ENCODE measurements at regions of chr14 and their contacts with region 1.

Region 1: DNA sequence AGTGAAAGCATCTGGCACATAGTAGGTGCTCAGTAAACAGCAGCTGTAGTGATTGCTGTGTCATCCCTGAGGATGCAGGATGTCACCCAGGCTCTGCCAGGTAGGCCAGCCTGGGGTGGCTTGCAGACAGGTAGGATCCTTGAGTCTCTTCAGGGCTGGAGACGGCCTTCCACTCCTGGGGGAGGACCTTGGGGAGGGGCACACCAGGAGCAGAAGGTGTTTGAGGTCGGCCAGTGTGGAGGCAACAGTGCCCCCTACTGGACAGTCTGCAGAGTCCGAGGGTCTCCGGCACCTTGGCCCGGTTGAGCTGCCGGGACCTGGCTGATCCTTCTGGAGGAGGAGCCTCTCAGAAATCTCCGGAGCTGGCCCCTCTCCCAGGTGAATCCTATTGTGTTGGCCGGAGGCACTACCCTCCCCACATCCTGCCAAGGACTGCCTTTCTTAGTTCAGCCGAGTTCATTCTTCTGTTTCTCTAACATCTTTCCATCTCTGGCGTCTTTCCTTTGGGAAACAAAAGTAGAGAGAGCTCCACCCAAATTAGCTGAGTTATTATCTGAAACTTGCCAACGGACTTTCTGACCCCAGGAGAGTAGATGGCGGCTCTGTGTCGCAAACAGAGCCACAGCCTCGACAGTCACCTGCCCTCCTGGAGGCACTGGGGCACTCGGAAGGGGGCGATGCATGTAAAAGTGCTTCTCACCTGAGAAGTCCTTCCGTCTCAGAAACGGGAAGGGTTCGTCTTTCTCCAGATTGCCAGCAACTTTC is 41.8 kb upstream of the CLMN start:
- DNase-seq: peak; percentile 36
- H3K4me3 ChIP-seq: no peak overlapping the region
- H3K27ac ChIP-seq: no peak overlapping the region
- H3K4me1 ChIP-seq: no peaks in the 10 kb centered on the region
- H3K27me3 ChIP-seq: peaks cover 0 to 4% of the 10 kb centered on the region in 2 experiments
- CTCF ChIP-seq: peak; percentile 66 to 75
- POLR2A ChIP-seq: no peak

Region 2: DNA sequence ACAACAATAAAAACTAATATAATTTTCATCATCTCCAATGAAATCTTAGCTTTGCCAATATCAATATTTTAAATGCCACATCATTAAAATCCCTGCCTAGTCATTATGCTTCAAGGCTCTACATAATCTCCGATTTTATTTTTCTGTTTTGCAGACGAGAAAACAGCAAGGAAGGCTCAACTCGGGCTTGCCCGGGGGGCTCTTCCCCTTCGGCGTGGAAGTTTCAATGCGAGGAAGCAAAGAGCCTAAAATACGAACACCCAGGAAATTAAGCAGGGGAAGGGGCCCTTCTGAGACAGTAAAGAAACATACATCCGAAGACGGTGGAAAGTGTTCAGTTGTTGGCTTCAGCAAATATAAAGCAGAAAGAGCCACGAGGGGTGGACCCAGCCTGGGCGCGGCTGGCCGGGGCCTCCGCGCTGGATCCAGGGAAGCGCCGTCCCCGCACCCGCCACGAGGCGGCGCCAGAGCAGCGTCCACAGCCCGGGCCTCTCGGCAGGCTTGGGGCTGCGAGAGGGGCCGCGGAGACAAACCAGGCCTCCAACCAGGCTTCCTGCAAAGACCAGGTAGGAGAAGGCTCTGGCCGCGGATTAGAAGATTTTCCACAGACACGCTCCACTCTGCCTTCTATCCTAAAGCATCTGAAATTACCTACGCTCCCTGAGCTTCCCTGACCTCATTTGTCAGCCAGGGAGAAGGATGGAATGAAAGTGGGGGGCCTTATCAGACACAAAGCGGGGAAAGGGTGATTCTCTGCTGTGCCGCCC is 672.2 kb before region 1 on chr14:
- CTCF ChIA-PET with region 1: interaction called, 16 read pairs
- POLR2A ChIA-PET with region 1: no interaction called
- dilution Hi-C with region 1: no loop called
- intact Hi-C with region 1: loop called (anchors 1 kb)
- DNase-seq: peak; percentile 33
- H3K4me3 ChIP-seq: peak overlapping the region in 1 of 3 experiments; percentile 47
- H3K27ac ChIP-seq: no peak overlapping the region
- H3K4me1 ChIP-seq: no peaks in the 10 kb centered on the region
- H3K27me3 ChIP-seq: peaks cover 0 to 2% of the 10 kb centered on the region in 2 experiments
- CTCF ChIP-seq: peak; percentile 95 to 98
- POLR2A ChIP-seq: no peak

Region 3: GRCh38 chr14:95157327-95158189 is 204.0 kb before region 1 on chr14 and contains the start of gene DICER1:
- CTCF ChIA-PET with region 1: interaction called, 7 read pairs
- POLR2A ChIA-PET with region 1: no interaction called
- dilution Hi-C with region 1: no loop called
- intact Hi-C with region 1: loop called (anchors 2 kb)
- DNase-seq: peak; percentile 94
- H3K4me3 ChIP-seq: peak within 1 kb of the TSS; percentile 60 to 92 (median 90)
- H3K27ac ChIP-seq: peak within 1 kb of the TSS; percentile 65
- H3K4me1 ChIP-seq: peaks cover 18% of the 10 kb centered on the region
- H3K27me3 ChIP-seq: no peaks in the 10 kb centered on the region
- CTCF ChIP-seq: no peak
- POLR2A ChIP-seq: peak; percentile 71
- total RNA-seq, gene DICER1: 41.1 and 43.6 TPM in 2 replicates

Region 4: DNA sequence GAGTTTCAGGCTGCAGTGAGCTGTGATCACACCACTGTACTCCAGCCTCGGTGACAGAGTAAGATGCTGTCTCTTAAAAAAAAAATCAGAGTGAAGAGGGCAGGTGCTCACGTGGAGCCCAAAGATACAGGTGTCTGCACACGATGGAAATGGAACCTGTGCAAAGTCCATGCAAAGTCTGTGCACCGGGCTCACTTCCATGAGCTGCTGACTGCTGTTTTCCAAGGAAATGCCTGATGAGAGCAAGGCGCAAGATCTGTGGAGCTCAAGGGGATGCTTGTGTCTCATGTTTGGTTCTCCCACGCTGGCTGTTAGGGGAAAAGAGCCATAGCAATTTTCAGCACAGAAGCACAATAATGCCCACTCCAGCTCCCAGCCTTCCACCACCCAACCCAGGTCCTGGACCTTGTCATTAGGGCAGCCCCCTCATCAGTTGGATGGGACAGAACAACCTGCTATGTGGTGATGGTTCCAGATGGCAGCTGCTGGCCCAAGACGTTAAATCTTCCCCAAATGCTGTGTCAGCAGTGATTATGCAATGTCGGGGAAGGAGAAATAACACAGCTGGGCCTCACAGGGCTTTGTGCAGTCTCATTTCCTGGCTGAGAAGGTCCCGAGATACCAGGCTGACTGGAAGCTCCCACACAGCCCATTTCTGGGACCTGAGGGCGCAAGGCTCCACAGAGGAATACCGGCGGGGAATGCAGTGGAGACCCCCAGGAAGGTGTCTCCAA is 176.4 kb before region 1 on chr14:
- CTCF ChIA-PET with region 1: interaction called, 12 read pairs
- POLR2A ChIA-PET with region 1: no interaction called
- dilution Hi-C with region 1: no loop called
- intact Hi-C with region 1: no loop called
- DNase-seq: peak; percentile 63
- H3K4me3 ChIP-seq: no peak overlapping the region
- H3K27ac ChIP-seq: peak overlapping the region; percentile 27
- H3K4me1 ChIP-seq: peaks cover 38% of the 10 kb centered on the region
- H3K27me3 ChIP-seq: no peaks in the 10 kb centered on the region
- CTCF ChIP-seq: no peak
- POLR2A ChIP-seq: no peak

Region 5: GRCh38 chr14:95265106-95266094 is 96.2 kb before region 1 on chr14:
- CTCF ChIA-PET with region 1: no interaction called
- POLR2A ChIA-PET with region 1: no interaction called
- dilution Hi-C with region 1: no loop called
- intact Hi-C with region 1: loop called (anchors 1 kb)
- DNase-seq: peak; percentile 96
- H3K4me3 ChIP-seq: peak overlapping the region in 1 of 3 experiments; percentile 37
- H3K27ac ChIP-seq: peak overlapping the region; percentile 98
- H3K4me1 ChIP-seq: peaks cover 23% of the 10 kb centered on the region
- H3K27me3 ChIP-seq: no peaks in the 10 kb centered on the region
- CTCF ChIP-seq: no peak
- POLR2A ChIP-seq: no peak

Region 6: DNA sequence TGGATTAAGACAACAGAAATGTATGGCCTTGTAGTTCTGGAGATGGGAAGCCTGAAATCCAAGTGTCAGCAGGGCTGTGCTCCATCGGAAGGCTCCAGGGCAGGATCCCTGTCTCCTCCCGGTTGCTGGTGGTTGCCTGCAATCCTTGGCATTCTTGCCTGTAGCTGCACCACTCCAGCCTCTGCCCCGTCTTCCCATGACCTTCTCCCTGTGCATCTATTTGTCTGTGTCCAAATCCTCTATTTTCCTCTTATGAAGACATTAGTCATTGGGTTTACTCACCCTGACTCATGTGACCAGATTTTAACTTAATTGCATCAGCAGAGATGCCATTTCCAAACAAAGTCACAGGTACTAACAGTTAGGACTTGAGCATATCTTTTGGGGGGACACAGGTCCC is 530.2 kb after region 1 on chr14:
- CTCF ChIA-PET with region 1: no interaction called
- POLR2A ChIA-PET with region 1: no interaction called
- dilution Hi-C with region 1: no loop called
- intact Hi-C with region 1: no loop called
- DNase-seq: no peak
- H3K4me3 ChIP-seq: no peak overlapping the region
- H3K27ac ChIP-seq: no peak overlapping the region
- H3K4me1 ChIP-seq: no peaks in the 10 kb centered on the region
- H3K27me3 ChIP-seq: no peaks in the 10 kb centered on the region
- CTCF ChIP-seq: no peak
- POLR2A ChIP-seq: no peak